MCF 10A (cell line): ENCODE measurements at regions of chr10 and their contacts with region 1.

Region 1: DNA sequence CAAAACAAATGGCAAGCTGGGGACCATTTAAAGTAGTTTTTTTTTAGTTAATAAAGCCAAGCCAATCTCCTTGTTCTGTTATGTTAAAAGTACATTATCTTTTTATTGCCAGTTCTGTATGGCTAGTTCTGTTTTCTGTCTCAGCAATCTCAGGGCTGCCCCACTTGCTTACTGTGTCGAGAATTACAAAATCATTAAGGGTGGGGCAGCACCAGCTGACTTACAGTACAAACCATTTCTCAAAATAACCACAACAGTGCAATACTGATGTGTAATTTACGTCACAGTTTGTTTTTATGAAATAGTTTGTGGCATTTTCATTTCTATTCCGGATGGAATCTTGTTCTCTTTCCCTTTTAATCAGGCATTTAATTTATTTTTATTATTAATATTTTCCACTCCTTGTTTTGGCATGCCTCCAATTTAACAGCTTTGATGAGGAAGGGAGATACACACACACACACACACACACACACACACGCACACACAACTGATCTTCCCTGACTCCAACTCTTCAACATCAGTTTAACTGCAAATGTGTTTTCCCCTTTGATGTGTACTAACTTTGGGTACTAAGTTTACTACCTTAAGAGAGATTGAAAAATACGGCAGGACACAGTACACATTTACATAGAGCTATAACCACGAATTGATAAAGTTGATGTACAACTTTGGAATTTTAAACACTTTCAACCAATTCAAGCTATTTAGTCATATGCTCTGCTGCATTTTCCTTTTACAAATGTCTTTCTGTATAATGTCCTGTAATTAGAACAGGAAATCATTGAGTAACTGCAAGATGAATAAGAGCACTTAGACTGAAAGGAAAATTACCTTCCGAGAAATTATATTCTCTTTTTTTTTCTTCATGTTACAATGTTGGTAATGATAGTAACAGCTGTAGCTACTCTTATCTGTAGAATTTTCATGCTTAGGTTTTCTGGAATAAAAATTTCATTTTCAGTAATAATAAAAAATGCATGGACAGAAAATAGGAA is 91.5 kb downstream of the ARID5B start:
- DNase-seq: peak; percentile 90
- H3K4me3 Mint-ChIP-seq: peak overlapping the region; percentile 75
- H3K27ac Mint-ChIP-seq: peak overlapping the region; percentile 96
- H3K4me1 Mint-ChIP-seq: peaks cover 38% of the 10 kb centered on the region
- H3K27me3 Mint-ChIP-seq: no peaks in the 10 kb centered on the region
- CTCF ChIP-seq: no peak

Region 2: DNA sequence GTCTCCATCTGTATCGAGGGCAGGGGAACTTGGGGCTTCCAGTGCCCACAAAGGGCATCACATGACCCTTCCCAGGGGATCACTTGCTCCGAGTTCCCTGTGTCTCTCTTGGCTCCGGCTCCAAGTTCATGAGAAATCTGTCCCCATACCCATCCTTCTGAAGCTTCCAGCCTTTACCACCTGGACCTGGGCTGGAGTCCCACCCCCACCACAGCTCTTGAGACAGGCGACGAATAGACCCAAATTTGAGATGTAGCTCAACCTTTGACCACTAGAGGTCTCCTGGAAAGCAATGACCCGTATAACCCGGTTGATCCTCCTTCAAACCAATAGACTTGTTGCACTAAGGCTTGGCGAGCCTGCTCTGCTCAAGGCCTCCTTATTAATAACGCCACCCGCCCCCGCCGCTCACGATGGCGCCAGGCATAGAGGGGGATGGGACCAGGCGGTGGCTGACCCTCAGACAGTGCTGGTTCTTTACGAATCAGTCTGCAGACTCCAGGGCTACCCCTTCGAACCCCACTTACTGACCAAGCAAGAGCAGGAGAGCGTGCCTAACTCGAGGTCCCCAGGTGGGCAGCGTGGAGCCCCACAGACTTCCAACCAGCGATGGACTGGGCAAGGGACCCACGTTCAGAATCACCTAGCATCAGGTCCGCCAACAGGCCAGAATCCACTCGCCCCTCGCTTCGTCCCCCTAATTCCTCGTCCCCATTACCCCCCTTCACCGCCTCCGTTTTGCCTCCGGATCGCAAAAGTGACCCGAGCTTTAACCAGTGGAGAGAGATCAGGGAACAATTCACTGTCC is 95.9 kb before region 1 on chr10:
- CTCF ChIA-PET with region 1: interaction called, 11 read pairs
- POLR2A ChIA-PET with region 1: interaction called, 115 read pairs
- intact Hi-C with region 1: loop called (anchors 2 kb)
- DNase-seq: peak; percentile 80
- H3K4me3 Mint-ChIP-seq: peak overlapping the region; percentile 50
- H3K27ac Mint-ChIP-seq: no peak overlapping the region
- H3K4me1 Mint-ChIP-seq: peaks cover 33% of the 10 kb centered on the region
- H3K27me3 Mint-ChIP-seq: no peaks in the 10 kb centered on the region
- CTCF ChIP-seq: peak; percentile 50

Region 3: DNA sequence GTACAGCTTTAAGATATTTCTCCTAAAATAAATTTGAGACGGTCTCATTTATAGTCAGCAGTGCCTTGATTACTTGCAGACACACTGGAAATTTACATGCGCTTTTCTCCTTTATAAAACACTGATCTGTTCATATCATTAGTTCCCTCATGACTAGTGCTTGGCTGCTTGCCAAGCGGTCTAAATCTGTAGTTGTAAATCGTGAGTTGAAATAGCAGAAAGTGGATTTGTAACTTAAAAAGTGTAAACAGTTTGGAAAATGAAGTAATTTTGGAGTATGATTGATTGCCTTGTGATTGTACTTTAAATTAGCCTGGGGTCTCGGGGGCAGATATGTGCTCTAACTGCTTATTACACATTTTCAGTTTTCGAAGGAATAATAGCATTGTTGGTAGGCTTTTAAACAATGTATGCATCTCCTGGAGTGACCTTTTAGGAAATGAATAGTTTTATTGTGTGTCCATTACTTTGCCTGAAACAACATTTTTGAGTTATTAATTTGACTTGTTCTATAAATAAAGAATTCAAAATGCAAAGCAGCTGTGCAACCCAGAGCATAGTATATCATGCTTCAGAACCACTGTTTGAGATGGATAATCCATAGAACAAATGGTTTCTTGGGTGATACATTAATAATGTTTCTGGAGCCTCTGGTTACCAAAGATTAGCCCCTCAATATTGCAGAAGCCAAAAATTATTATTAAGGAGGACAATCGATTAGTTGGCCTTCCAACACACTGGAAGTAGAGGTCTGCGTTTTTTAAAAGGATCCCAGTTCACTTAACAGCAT is 18.2 kb before region 1 on chr10:
- CTCF ChIA-PET with region 1: interaction called, 3 read pairs
- POLR2A ChIA-PET with region 1: interaction called, 14 read pairs
- intact Hi-C with region 1: no loop called
- DNase-seq: peak; percentile 50
- H3K4me3 Mint-ChIP-seq: no peak overlapping the region
- H3K27ac Mint-ChIP-seq: no peak overlapping the region
- H3K4me1 Mint-ChIP-seq: peaks cover 16% of the 10 kb centered on the region
- H3K27me3 Mint-ChIP-seq: no peaks in the 10 kb centered on the region
- CTCF ChIP-seq: no peak

Region 4: GRCh38 chr10:62019013-62019684 is 26.2 kb after region 1 on chr10:
- CTCF ChIA-PET with region 1: interaction called, 4 read pairs
- POLR2A ChIA-PET with region 1: interaction called, 34 read pairs
- intact Hi-C with region 1: no loop called
- DNase-seq: no peak
- H3K4me3 Mint-ChIP-seq: no peak overlapping the region
- H3K27ac Mint-ChIP-seq: peak overlapping the region; percentile 74
- H3K4me1 Mint-ChIP-seq: peaks cover 15% of the 10 kb centered on the region
- H3K27me3 Mint-ChIP-seq: no peaks in the 10 kb centered on the region
- CTCF ChIP-seq: no peak

Region 5: GRCh38 chr10:62038609-62039190 is 45.7 kb after region 1 on chr10:
- CTCF ChIA-PET with region 1: interaction called, 15 read pairs
- POLR2A ChIA-PET with region 1: interaction called, 25 read pairs
- intact Hi-C with region 1: no loop called
- DNase-seq: peak; percentile 78
- H3K4me3 Mint-ChIP-seq: peak overlapping the region; percentile 30
- H3K27ac Mint-ChIP-seq: peak overlapping the region; percentile 52
- H3K4me1 Mint-ChIP-seq: peaks cover 41% of the 10 kb centered on the region
- H3K27me3 Mint-ChIP-seq: no peaks in the 10 kb centered on the region
- CTCF ChIP-seq: peak; percentile 76

Region 6: DNA sequence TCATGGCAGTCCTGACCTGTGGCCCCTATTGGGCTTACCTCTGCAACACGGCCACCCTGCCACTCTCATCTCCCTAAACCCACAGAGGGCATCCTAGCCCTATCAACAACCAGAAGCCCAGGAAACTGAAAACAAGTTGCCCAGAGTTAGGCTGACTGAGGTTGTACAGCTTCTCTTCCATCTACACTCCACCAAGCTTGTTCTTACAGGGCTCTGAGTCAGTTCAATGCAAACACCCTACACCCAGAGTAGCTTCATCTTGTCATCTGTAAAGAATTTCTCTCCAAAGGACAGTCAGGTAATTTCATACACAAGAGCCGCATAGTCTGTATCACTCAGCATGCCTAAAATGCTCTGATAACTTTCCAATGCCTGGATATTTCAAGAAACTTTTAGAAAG is 83.9 kb after region 1 on chr10:
- CTCF ChIA-PET with region 1: no interaction called
- POLR2A ChIA-PET with region 1: no interaction called
- intact Hi-C with region 1: no loop called
- DNase-seq: peak; percentile 46
- H3K4me3 Mint-ChIP-seq: peak overlapping the region; percentile 21
- H3K27ac Mint-ChIP-seq: peak overlapping the region; percentile 75
- H3K4me1 Mint-ChIP-seq: peaks cover 20% of the 10 kb centered on the region
- H3K27me3 Mint-ChIP-seq: no peaks in the 10 kb centered on the region
- CTCF ChIP-seq: no peak